ENCODE measurements at regions of chr1 and their contacts with region 1.

Region 1: DNA sequence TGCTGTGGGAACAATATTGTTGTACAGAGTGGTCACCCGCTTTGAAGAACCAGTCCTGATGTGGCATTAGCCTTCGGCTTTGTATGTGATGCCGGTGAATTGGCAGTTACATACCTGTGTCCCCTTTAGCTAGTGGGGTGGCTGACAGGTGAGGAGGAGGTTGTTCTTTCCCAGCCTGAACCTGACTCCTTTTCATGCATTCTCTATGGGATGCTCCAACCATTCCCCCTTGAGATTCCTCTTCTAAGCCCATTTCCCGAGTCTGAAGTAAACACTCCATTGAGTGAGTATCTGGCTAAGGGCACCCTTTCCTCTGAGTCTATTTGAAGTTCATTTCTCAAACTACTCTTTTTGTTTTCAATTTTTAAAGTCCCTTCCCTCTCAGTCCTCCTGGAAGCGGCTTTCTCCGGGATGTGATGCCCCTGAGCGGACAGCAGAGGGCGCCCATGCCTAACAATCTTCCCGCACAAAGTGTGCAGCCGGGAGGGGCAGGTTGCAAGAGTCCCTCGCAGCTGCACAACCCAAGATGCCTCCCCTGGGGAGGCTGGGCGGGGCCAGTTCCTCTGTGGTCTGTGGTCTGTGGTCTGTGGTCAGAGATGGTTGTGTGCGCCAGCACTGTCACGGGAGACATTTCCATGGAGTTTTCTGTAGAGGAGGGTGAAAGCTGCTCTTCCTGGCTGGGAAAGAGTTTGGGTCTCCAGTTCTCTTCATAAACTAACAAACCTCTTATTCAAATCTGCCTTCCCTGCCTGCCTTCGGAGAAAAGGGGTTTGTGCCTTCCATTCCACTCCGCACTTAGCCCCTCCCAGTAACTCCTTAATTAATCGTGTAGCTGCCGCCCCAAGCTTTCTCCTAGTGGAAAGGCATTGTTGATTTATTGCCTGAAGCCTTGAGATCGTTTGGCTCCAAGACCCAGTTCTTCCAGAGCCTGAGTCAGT is 36.4 kb upstream of the LMX1A start:
- DNase-seq: peak; percentile 81 to 95 (median 90)
- ATAC-seq: peak; percentile 99
- H3K4me3 ChIP-seq: no peak overlapping the region
- H3K4me3 Mint-ChIP-seq: peak overlapping the region; percentile 43
- H3K27ac ChIP-seq: no peak overlapping the region
- H3K27ac Mint-ChIP-seq: peak overlapping the region; percentile 64
- H3K4me1 ChIP-seq: peaks cover 15% of the 10 kb centered on the region
- H3K4me1 Mint-ChIP-seq: peaks cover 16% of the 10 kb centered on the region
- H3K27me3 ChIP-seq: peaks cover 8 to 13% of the 10 kb centered on the region in 2 experiments
- H3K27me3 Mint-ChIP-seq: peaks cover 62% of the 10 kb centered on the region
- CTCF ChIP-seq: peak; percentile 92

Region 2: DNA sequence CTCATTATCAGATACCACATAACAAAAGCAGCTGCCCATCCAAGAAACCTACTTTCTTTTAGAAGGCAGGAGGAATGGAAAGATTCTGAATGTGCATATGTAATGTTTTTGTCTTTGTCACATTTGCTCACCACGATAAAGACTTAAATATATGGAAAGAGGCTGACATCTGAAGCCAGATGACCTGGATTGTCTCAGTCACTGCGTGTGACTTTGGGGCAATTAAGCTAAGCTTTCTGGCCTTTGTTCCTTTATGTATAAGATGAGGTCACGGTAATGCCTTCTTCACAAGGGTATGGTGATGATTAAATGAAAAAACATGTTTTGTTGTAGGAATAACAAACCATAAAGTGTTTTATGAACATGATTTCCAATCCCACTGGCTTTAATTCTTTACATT is 193.5 kb after region 1 on chr1:
- CTCF ChIA-PET with region 1: interaction called, 243 read pairs
- POLR2A ChIA-PET with region 1: interaction called, 5 read pairs
- intact Hi-C with region 1: no loop called
- DNase-seq: no peak
- ATAC-seq: no peak
- H3K4me3 ChIP-seq: no peak overlapping the region
- H3K4me3 Mint-ChIP-seq: no peak overlapping the region
- H3K27ac ChIP-seq: no peak overlapping the region
- H3K27ac Mint-ChIP-seq: no peak overlapping the region
- H3K4me1 ChIP-seq: no peaks in the 10 kb centered on the region
- H3K4me1 Mint-ChIP-seq: no peaks in the 10 kb centered on the region
- H3K27me3 ChIP-seq: no peaks in the 10 kb centered on the region
- H3K27me3 Mint-ChIP-seq: peaks cover 44% of the 10 kb centered on the region
- CTCF ChIP-seq: no peak

Region 3: DNA sequence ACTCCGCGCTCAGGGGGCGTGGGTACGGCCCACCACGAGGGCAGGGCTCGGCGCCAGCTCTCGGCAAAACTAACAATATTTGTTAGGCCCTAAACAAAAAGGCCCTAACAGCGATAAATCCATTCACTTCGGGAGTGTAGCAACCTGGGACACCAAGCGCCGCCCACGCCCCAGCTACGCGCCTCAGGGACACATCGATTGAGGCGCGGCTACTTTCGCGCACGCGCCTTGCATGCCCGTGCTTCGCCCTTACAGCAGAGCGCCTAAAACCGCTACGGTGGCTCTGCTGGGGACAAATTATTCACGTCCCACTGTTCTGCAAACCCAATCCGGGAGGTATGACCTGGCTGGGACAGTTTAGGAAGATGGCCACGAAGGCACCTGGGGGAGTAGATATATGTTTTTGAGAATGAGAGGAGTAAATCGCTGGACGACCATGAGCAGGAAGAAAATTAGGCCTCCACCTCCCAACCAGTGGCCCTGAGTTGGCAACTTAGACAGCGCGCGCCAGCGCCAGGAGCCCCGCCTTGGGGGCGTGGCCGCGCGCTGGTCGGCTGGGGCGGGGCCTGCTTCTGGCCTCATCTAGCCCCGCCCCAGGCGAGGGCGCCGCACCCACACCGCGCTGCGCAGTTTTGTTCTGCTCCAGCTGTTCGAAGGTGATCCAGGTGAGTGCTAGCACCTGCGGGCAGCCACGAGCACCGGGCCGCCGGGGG is 237.9 kb after region 1 on chr1 and contains the start of gene MGST3:
- CTCF ChIA-PET with region 1: no interaction called
- POLR2A ChIA-PET with region 1: no interaction called
- intact Hi-C with region 1: loop called in 1 of 2 experiments (anchors 1 kb)
- DNase-seq: peak; percentile 81 to 96 (median 91)
- ATAC-seq: peak; percentile 93
- H3K4me3 ChIP-seq: peak within 1 kb of the TSS; percentile 62 to 71
- H3K4me3 Mint-ChIP-seq: no peak within 1 kb of the TSS
- H3K27ac ChIP-seq: peak within 1 kb of the TSS; percentile 56 to 89
- H3K27ac Mint-ChIP-seq: peak within 1 kb of the TSS; percentile 66
- H3K4me1 ChIP-seq: peaks cover 17% of the 10 kb centered on the region
- H3K4me1 Mint-ChIP-seq: peaks cover 19% of the 10 kb centered on the region
- H3K27me3 ChIP-seq: no peaks in the 10 kb centered on the region
- H3K27me3 Mint-ChIP-seq: no peaks in the 10 kb centered on the region
- CTCF ChIP-seq: no peak
- total RNA-seq, gene MGST3: 13.8 to 16.6 TPM

Region 4: DNA sequence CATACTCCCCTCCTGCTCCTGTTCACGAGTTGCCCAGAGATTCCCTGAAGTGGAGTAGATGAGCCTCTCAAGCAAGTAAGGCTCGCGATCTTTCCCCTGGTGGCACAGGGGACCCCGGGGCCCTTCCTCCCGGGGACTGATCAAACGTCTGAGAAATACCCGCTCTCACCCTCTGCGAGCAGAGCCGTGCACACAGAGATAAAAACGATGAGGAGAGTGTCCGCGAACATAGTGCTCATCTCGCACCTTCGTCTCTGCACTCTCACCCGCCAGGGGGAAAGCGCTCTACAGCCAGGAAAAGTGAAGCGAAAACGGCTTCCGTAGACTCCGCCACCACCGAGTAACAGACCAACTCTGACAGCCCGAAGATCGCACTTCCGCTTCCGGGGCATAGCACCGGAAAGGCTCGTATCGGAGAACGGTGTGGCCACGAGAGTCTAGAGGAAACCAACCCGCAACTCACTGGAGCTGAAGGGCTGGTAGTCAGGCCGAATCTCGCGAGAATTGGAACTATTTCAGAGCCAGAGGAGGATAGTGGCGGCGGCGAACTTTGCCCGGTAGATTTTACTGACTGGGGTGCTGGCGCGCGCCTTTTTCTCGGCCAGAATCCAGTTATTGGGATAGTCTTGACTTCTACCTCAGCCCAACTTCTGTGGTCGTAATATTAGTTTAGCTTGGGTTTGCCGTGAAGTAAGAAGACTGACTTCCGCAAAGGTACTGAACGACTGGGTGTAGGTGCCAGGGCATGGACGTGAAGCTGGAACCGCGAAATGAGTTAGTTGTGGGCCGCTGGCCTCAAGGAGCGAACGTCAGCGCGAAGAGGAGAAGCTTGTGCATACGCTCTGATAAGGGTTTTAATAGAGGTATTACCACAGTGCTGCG is 375.9 kb after region 1 on chr1 and contains the start of gene TMCO1:
- CTCF ChIA-PET with region 1: interaction called, 4 read pairs
- POLR2A ChIA-PET with region 1: no interaction called
- intact Hi-C with region 1: loop called in 1 of 2 experiments (anchors 10 kb)
- DNase-seq: peak; percentile 84 to 99 (median 92)
- ATAC-seq: peak; percentile 93
- H3K4me3 ChIP-seq: peak within 1 kb of the TSS; percentile 85 to 93
- H3K4me3 Mint-ChIP-seq: peak within 1 kb of the TSS; percentile 99
- H3K27ac ChIP-seq: peak within 1 kb of the TSS; percentile 71 to 96
- H3K27ac Mint-ChIP-seq: peak within 1 kb of the TSS; percentile 99
- H3K4me1 ChIP-seq: peaks cover 50% of the 10 kb centered on the region
- H3K4me1 Mint-ChIP-seq: peaks cover 65% of the 10 kb centered on the region
- H3K27me3 ChIP-seq: no peaks in the 10 kb centered on the region
- H3K27me3 Mint-ChIP-seq: no peaks in the 10 kb centered on the region
- CTCF ChIP-seq: peak; percentile 24
- total RNA-seq, gene TMCO1: 30.5 to 33.5 TPM

Region 5: GRCh38 chr1:167016100-167016750 is 1623.3 kb after region 1 on chr1:
- CTCF ChIA-PET with region 1: no interaction called
- POLR2A ChIA-PET with region 1: no interaction called
- intact Hi-C with region 1: no loop called
- DNase-seq: no peak
- ATAC-seq: no peak
- H3K4me3 ChIP-seq: no peak overlapping the region
- H3K4me3 Mint-ChIP-seq: no peak overlapping the region
- H3K27ac ChIP-seq: no peak overlapping the region
- H3K27ac Mint-ChIP-seq: no peak overlapping the region
- H3K4me1 ChIP-seq: no peaks in the 10 kb centered on the region
- H3K4me1 Mint-ChIP-seq: no peaks in the 10 kb centered on the region
- H3K27me3 ChIP-seq: peaks cover 0 to 2% of the 10 kb centered on the region in 2 experiments
- H3K27me3 Mint-ChIP-seq: peaks cover 18% of the 10 kb centered on the region
- CTCF ChIP-seq: no peak

Measured in CD8-positive, alpha-beta T cell (primary cell).